ENCODE measurements at regions of chr10 and their contacts with region 1.

Region 1: DNA sequence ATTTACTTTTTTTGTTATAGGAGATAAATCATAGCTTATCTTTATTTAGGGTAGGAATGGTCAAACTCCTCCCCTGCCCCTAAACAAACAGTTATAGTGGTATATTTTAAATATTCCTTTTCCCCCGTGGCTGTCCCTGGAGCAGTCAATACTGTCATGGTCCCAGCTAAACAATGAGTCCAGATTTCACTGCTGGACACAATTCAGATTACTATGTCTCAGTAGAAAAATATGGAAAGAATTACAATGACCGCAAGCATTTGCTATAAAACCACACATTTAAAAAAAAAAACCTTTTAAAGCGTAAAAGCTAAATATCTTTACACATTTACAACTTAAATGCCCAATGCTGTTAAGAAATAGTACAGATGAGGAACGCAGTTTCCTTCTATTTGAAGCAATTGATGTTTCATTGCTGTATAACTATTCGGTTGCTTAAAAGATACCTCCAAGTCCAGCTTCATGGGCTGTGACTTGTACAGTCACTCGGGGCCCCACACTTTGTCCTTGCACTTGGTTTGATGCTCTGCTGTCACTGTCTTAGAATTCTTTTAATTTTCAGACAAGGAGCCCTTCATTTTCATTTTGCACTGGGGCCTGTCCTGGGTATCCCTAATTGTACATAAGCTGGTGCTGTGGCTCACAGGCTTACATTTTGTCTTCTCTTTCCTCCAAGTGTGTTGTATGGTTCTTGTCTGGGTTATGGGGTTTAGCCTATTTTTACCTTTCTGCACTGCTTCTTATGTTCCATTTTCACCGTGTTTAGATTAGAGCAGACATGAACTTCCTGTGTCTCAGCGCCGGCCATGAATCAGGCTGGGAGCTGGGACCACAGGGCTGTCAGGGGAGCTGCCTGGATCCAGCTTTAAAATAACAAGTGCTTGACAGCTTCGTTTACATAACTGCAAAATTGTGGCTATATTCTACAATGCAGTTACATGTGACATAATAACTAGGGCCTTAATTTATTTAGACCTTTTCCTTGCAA is 530.2 kb upstream of the FZD8 start:
- DNase-seq: peak; percentile 99
- ATAC-seq: peak; percentile 71
- H3K4me3 ChIP-seq: peak overlapping the region; percentile 28
- H3K27ac ChIP-seq: peak overlapping the region; percentile 79
- H3K4me1 ChIP-seq: peaks cover 43% of the 10 kb centered on the region
- H3K27me3 ChIP-seq: no peaks in the 10 kb centered on the region
- CTCF ChIP-seq: no peak

Region 2: GRCh38 chr10:35795131-35795819 is 377.0 kb before region 1 on chr10:
- CTCF ChIA-PET with region 1: no interaction called
- POLR2A ChIA-PET with region 1: no interaction called
- intact Hi-C with region 1: loop called (anchors 1 kb)
- DNase-seq: peak; percentile 100
- ATAC-seq: peak; percentile 94
- H3K4me3 ChIP-seq: peak overlapping the region; percentile 12
- H3K27ac ChIP-seq: peak overlapping the region; percentile 80
- H3K4me1 ChIP-seq: peaks cover 46% of the 10 kb centered on the region
- H3K27me3 ChIP-seq: no peaks in the 10 kb centered on the region
- CTCF ChIP-seq: no peak

Region 3: GRCh38 chr10:36023939-36024338 is 148.3 kb before region 1 on chr10:
- CTCF ChIA-PET with region 1: interaction called, 5 read pairs
- POLR2A ChIA-PET with region 1: no interaction called
- intact Hi-C with region 1: loop called (anchors 1 kb)
- DNase-seq: peak; percentile 100
- ATAC-seq: peak; percentile 98
- H3K4me3 ChIP-seq: no peak overlapping the region
- H3K27ac ChIP-seq: peak overlapping the region; percentile 69
- H3K4me1 ChIP-seq: peaks cover 15% of the 10 kb centered on the region
- H3K27me3 ChIP-seq: no peaks in the 10 kb centered on the region
- CTCF ChIP-seq: no peak

Region 4: DNA sequence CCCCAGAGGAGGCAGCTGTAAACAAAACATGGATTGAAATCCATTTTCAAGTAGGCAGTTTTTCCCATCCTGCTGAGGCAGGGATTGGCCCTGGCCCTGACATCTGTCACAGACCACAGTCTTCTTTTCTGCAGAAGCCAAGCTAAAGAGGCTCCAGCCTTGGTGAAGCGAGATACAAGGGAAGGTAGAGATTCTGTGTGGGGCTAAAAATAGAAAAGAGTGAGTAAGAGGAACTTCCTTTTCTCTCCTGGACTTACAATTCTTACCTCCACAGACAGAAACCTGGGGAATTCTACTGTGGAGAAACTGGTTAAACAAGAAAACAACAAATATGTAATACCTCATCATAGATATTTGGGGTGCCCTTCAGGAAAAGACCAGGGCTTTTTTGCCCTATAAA is 94.7 kb after region 1 on chr10:
- CTCF ChIA-PET with region 1: no interaction called
- POLR2A ChIA-PET with region 1: no interaction called
- intact Hi-C with region 1: no loop called
- DNase-seq: peak; percentile 90
- ATAC-seq: peak; percentile 73
- H3K4me3 ChIP-seq: no peak overlapping the region
- H3K27ac ChIP-seq: peak overlapping the region; percentile 26
- H3K4me1 ChIP-seq: peaks cover 17% of the 10 kb centered on the region
- H3K27me3 ChIP-seq: no peaks in the 10 kb centered on the region
- CTCF ChIP-seq: no peak

Region 5: DNA sequence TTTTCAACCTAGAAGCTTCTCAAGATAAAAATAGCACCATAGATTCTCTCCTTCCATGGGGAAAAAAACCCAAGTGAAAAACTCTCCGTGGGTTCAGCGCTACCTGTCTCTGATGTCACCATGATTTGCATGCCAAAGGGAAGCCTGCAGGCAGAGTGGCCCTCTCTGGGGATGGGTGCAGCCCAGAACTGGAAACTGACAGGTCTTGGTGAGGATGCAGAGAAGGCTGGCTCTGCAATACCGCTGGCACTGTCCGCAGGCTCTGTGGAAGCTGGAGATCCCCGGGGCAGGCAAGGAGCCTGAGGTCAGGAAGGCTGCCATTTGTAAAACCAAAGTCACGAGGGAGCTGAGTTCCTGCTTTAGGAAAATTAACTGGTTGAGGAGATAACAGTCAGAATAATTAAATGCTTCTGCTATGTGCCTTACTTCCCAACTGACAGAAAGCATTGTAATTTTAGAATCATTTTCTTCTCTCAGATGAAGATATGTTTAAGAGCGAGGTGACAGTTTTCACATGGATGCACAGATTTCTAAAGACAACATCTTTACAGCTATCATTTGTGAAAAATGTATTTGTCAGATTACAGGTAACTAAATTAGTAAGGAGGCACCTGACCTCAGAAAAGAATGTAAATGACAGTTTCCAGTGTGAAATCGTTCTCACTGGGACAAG is 201.3 kb after region 1 on chr10:
- CTCF ChIA-PET with region 1: no interaction called
- POLR2A ChIA-PET with region 1: no interaction called
- intact Hi-C with region 1: loop called (anchors 1 kb)
- DNase-seq: no peak
- ATAC-seq: no peak
- H3K4me3 ChIP-seq: no peak overlapping the region
- H3K27ac ChIP-seq: no peak overlapping the region
- H3K4me1 ChIP-seq: peaks cover 6% of the 10 kb centered on the region
- H3K27me3 ChIP-seq: no peaks in the 10 kb centered on the region
- CTCF ChIP-seq: no peak

Region 6: DNA sequence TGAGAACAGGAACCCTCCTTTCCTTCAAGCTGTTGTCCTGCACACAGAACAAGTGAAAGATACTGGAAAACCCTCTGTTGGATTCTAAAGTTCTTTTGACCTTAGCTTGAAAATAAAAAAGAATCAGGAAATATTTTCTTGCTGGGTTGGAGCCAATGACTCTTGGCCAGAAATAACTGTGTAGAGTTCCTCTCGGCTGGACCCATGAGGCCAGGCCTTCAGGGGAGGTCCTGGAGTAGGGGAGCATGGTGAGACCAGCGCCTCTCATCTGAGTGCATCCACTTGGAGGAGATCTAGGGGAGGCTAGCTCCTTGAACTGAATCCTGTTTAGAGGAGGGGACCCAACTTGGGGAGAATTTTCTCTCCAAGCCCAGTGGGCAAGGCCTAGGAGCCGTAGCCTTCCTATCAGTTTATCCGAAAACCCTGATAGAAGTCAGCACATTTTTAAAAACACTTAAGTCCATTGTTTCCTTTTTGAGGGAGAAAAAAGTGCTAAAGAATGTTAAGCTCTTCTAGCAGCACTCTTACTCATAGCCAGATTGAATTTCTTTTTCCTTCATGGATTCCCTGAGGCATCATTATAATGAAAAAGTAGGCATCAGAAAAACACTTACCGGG is 317.5 kb after region 1 on chr10:
- CTCF ChIA-PET with region 1: interaction called, 4 read pairs
- POLR2A ChIA-PET with region 1: interaction called, 3 read pairs
- intact Hi-C with region 1: loop called (anchors 1 kb)
- DNase-seq: peak; percentile 96
- ATAC-seq: peak; percentile 9
- H3K4me3 ChIP-seq: no peak overlapping the region
- H3K27ac ChIP-seq: peak overlapping the region; percentile 83
- H3K4me1 ChIP-seq: peaks cover 55% of the 10 kb centered on the region
- H3K27me3 ChIP-seq: no peaks in the 10 kb centered on the region
- CTCF ChIP-seq: no peak

Region 7: DNA sequence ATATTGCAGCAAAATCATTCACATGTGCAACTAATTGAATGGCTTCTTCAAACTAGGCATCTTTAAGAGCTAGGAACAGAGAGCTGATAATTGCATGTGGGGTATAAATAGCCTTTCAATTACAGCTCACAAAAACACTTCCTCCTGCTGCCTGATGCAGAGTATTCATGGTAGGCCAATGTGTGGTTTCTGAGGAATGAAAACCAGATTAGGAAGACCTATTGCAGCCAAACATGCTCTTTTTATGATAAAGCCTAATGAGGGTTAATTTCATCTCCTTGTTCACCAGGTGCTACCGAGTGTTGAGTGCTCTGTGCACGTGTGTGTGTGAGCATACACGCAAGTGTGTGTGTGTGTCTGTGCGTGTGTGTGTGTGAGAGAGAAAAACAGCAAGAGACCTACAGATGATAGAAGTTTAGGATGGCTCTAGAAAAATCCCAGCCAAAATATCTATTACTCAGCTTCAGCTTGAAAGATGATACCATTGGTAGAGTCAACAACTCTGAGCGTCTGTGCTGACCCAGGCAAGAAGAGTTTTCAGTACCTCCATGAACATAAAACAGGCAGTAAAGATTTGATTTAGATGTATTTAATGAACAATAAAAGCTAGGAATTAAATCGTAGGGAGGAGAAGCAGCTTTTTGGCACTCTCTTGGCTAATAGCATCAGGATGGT is 504.6 kb after region 1 on chr10:
- CTCF ChIA-PET with region 1: no interaction called
- POLR2A ChIA-PET with region 1: no interaction called
- intact Hi-C with region 1: loop called (anchors 5 kb)
- DNase-seq: peak; percentile 90
- ATAC-seq: peak; percentile 72
- H3K4me3 ChIP-seq: no peak overlapping the region
- H3K27ac ChIP-seq: peak overlapping the region; percentile 47
- H3K4me1 ChIP-seq: peaks cover 47% of the 10 kb centered on the region
- H3K27me3 ChIP-seq: no peaks in the 10 kb centered on the region
- CTCF ChIP-seq: no peak

Measured in PC-3 (cell line).